AG04449 (cell line): ENCODE measurements at regions of chr9 and their contacts with region 1.

Region 1: GRCh38 chr9:101449140-101449721 is 13.7 kb upstream of the ALDOB start:
- DNase-seq: no peak
- H3K4me3 ChIP-seq: peak overlapping the region; percentile 72
- CTCF ChIP-seq: peak; percentile 86

Region 2: GRCh38 chr9:101437806-101438232 is 11.4 kb before region 1 on chr9:
- CTCF ChIA-PET with region 1: interaction called, 11 read pairs
- POLR2A ChIA-PET with region 1: no interaction called
- DNase-seq: no peak
- H3K4me3 ChIP-seq: no peak overlapping the region
- CTCF ChIP-seq: no peak

Region 3: GRCh38 chr9:101486693-101487442 is 37.6 kb after region 1 on chr9:
- CTCF ChIA-PET with region 1: interaction called, 13 read pairs
- POLR2A ChIA-PET with region 1: interaction called, 3 read pairs
- DNase-seq: no peak
- H3K4me3 ChIP-seq: peak overlapping the region; percentile 71
- CTCF ChIP-seq: peak; percentile 38

Region 4: DNA sequence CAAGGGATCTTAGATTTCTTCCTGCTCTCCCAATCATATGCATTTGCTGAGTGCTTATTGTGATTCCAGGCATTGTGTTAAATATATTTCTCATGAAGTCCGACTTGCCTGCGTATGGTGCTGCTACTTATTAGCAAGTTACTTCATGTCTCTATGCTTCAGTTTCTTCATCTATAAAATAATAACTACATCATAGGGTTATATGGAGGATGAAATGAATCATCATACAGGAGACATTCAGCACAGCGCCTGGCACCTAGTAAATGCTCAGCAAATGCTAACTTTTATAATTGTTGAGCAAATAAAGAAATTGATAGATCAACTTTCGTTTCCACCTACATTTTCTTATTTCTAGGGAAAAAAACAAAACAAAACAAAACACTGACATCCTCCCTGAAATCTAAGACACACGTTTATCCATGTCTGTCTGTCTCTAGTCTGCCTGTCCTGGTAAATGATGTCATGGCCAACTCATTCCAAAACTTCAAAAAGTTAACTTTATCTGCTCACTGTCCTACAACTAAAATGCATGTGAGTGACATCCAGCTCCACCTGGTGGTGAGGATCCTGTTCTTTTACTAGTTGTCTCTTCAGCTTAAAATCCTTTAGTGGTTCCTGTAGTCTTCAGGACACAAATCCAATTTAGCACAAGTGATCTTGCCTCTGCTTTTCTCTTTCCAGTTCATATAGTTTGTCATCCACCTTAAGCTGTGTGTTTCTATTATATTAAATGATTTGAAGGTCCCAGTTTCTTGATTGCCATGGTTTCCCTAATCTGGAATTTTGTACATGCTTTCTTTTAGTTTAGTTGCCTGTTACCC is 117.9 kb after region 1 on chr9:
- CTCF ChIA-PET with region 1: interaction called, 16 read pairs
- POLR2A ChIA-PET with region 1: no interaction called
- DNase-seq: no peak
- H3K4me3 ChIP-seq: no peak overlapping the region
- CTCF ChIP-seq: peak; percentile 50